GM18951 (cell line): ENCODE measurements at regions of chr7 and their contacts with region 1.

Region 1: DNA sequence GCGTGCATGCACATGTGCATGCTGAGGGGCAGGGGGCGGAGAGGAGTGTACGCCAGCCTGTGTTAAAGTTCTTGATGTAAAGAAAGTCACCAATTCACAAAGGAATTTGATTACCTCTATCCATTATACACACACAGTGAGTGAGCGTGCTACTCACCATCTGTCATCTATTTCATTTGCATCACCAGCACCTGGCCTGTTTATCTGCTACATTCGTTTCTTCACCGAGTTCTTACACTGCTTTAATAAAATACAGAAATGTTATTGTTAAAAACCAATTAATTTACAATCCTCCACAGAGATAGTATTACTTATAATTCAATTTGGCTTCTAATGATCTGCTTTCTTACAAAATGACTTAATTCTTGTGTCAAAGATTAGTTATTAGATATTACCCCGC is 32.6 kb downstream of the NEUROD6 start:
- POLR2A ChIP-seq: no peak

Region 2: DNA sequence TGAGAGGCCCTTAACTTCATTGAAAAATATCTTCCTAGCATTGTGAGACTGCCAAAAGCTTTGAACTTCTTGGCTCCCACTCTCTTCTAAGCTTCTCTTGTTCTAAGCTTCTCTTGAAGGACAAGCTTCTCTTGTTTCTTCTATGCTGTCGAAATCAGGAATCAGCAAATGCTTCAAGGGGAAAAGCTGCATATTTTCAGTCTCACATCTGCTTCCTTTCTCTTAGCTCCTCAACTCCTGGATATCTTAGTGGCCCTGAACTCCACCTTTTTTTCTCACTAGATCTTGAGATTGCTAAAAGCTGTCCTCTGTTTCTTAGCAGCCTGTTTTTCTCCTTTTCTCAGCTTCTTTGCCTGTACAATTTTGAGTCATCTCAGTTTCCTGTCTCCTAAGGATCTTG is 40.5 kb before region 1 on chr7:
- in situ Hi-C with region 1: loop called (anchors 5 kb)
- POLR2A ChIP-seq: no peak

Region 3: GRCh38 chr7:31423994-31424393 is 116.0 kb after region 1 on chr7:
- in situ Hi-C with region 1: no loop called
- POLR2A ChIP-seq: no peak